ENCODE measurements at regions of chr4 and their contacts with region 1.

Region 1: GRCh38 chr4:108683479-108683878 is 33.1 kb downstream of the OSTC start:
- DNase-seq: peak in 1 of 2 experiments; percentile 2
- H3K4me3 ChIP-seq: no peak overlapping the region
- H3K4me3 Mint-ChIP-seq: no peak overlapping the region
- H3K27ac Mint-ChIP-seq: no peak overlapping the region
- H3K4me1 ChIP-seq: no peaks in the 10 kb centered on the region
- H3K4me1 Mint-ChIP-seq: no peaks in the 10 kb centered on the region
- H3K27me3 ChIP-seq: no peaks in the 10 kb centered on the region
- H3K27me3 Mint-ChIP-seq: no peaks in the 10 kb centered on the region
- CTCF ChIP-seq: peak; percentile 15 to 37

Region 2: DNA sequence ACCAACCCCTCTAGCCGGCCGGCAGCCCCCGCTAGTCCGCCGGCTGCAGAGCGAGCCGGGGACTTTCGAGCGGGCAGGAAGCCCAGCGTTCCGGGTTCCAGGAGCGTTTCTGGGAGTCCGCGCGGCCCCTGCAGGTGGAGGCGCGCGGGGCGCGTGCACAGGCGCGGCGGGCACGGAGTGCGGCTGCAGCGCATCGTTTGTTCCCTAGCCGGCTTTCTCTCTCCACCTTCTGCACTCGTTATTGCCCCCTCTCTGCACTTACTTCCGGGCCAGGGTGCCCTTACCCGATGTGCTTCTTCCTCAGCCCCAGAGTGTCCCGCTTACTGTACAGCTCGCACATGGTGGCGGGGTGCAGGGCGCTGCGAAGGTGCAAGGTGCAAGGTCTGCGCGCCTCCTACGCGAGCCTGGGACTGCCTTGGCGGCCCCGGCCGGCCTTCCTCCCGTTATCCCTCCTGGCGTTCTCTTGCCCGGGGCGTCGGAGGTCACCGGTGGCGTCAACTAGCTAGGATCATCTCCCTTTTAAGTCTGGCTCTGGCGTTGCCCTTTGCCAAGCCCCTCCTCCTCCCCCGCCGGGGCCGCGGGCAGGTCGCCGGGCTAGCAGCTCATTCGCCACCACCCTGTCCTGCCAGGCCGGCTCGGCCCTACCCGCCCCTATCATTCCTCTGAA is 79.2 kb after region 1 on chr4 and contains the start of gene ETNPPL:
- CTCF ChIA-PET with region 1: no interaction called
- POLR2A ChIA-PET with region 1: no interaction called
- intact Hi-C with region 1: loop called (anchors 5 kb)
- DNase-seq: peak in 1 of 2 experiments; percentile 32
- H3K4me3 ChIP-seq: peak within 1 kb of the TSS; percentile 42
- H3K4me3 Mint-ChIP-seq: peak within 1 kb of the TSS; percentile 75
- H3K27ac Mint-ChIP-seq: no peak within 1 kb of the TSS
- H3K4me1 ChIP-seq: no peaks in the 10 kb centered on the region
- H3K4me1 Mint-ChIP-seq: peaks cover 7% of the 10 kb centered on the region
- H3K27me3 ChIP-seq: peaks cover 1% of the 10 kb centered on the region; the same call in 1 of the 2 replicates
- H3K27me3 Mint-ChIP-seq: peaks cover 13% of the 10 kb centered on the region
- CTCF ChIP-seq: no peak
- total RNA-seq, gene ETNPPL: not detected in 2 replicates

Region 3: DNA sequence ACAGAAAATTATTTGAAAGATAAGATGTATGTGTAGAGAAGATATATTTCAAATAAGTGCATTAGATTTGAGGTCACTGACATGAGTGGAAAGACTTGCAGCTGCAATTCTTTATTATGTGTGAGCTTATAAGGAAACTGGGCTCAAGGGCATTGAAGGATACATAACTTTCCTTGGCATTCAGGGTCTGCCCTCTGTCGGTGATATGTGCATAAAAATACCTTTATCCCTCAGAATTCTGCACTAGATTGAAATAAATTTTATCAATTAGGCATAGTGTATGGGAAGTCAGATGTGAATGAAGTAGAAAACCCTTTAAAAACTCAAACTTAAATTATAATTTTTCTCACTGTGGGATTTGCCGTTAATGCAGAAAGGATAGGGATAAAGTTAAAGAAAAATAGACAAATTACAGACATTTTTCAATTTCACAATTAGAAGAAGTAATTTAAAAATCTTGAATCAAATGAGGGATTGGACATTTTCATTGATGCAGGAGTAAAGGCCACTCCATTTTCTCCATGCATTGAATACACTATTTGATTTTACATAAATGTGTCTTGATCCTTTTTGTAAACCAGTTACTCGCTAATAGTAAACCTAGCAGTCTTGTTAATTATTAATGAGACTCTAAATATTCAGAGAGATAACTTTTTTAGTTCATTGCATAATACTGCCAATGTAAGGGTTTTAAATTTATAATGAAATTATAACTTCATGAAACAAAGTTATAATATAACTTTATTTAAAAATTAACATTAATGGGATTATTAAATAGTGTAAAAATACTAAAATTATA is 100.4 kb after region 1 on chr4:
- CTCF ChIA-PET with region 1: no interaction called
- POLR2A ChIA-PET with region 1: no interaction called
- intact Hi-C with region 1: loop called (anchors 1 kb)
- DNase-seq: no peak
- H3K4me3 ChIP-seq: no peak overlapping the region
- H3K4me3 Mint-ChIP-seq: no peak overlapping the region
- H3K27ac Mint-ChIP-seq: no peak overlapping the region
- H3K4me1 ChIP-seq: no peaks in the 10 kb centered on the region
- H3K4me1 Mint-ChIP-seq: no peaks in the 10 kb centered on the region
- H3K27me3 ChIP-seq: no peaks in the 10 kb centered on the region
- H3K27me3 Mint-ChIP-seq: peaks cover 3% of the 10 kb centered on the region
- CTCF ChIP-seq: peak; percentile 15 to 23

Region 4: GRCh38 chr4:109406338-109406931 is 723.0 kb after region 1 on chr4:
- CTCF ChIA-PET with region 1: no interaction called
- POLR2A ChIA-PET with region 1: no interaction called
- intact Hi-C with region 1: loop called (anchors 2 kb)
- DNase-seq: peak in 1 of 2 experiments; percentile 45
- H3K4me3 ChIP-seq: no peak overlapping the region
- H3K4me3 Mint-ChIP-seq: no peak overlapping the region
- H3K27ac Mint-ChIP-seq: no peak overlapping the region
- H3K4me1 ChIP-seq: no peaks in the 10 kb centered on the region
- H3K4me1 Mint-ChIP-seq: no peaks in the 10 kb centered on the region
- H3K27me3 ChIP-seq: no peaks in the 10 kb centered on the region
- H3K27me3 Mint-ChIP-seq: peaks cover 14% of the 10 kb centered on the region
- CTCF ChIP-seq: peak; percentile 54 to 65

Measured in Caco-2 (cell line).